ENCODE measurements at regions of chr19 and their contacts with region 1.

Region 1: DNA sequence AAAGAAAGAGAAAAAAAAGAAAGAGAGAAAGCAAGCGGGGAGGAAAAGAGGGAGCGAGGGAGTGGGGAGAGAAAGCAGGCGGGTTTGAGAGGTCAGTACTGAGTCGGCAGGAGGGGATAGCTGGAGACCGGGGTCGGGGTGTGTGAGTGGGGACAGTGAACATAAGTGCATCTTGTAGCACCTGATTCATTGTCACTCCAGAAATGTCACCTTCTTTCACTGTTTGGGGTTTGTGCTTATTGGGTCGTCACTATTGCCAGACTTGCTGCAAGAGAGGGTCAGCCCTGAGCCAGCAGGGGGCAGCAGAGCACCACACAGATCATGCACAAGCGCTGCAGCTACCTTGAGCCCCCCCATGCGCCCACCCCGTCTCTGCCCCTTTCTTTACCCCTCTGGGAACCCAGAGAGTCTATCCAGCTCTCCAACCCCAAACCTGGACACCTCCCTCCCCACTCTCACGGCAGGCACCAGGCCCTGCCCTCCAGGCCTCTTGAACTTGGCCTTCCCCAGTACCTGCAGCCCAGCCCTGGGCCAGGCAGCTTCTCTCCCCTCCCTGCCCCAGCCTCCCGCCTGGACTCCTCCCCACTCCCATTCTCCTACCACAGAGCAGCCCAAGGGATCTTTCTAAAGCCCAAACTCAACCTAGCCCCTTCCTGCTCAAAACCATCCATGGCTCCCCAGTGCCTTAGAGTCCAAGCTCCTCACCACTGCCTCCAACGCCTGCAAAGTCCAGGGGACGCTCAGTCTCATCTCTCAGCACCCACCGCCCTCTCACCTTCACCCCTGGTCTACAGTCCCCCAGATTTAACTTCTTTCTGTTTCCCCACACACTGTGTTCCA is 9.7 kb upstream of the CEACAM16 start:
- DNase-seq: peak; percentile 93
- H3K4me3 Mint-ChIP-seq: no peak overlapping the region
- H3K27ac Mint-ChIP-seq: peak overlapping the region; percentile 27
- H3K4me1 Mint-ChIP-seq: peaks cover 38% of the 10 kb centered on the region
- H3K27me3 Mint-ChIP-seq: peaks cover 12% of the 10 kb centered on the region

Region 2: GRCh38 chr19:44607049-44607448 is 82.2 kb before region 1 on chr19:
- intact Hi-C with region 1: no loop called
- DNase-seq: no peak
- H3K4me3 Mint-ChIP-seq: no peak overlapping the region
- H3K27ac Mint-ChIP-seq: no peak overlapping the region
- H3K4me1 Mint-ChIP-seq: peaks cover 2% of the 10 kb centered on the region
- H3K27me3 Mint-ChIP-seq: no peaks in the 10 kb centered on the region

Region 3: DNA sequence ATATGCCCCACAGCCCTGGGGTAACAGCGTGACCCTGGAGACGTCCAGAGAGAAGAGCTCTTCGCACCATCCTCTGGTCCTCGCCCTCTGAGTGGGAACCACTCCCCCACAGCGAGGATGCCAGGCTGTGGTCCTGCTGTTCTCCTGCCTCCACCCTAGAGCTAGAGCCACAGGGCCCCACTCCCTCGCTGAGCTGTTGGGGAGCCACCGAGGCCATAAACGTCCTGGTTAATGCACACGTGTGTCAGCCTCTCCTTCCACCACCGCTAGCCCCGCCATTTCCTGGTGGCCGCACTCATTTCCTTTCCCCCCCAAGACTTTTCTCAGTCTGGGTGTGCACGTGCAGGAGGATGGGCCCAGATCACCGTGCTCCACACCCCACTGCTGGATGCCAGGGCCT is 21.2 kb after region 1 on chr19:
- intact Hi-C with region 1: no loop called
- DNase-seq: no peak
- H3K4me3 Mint-ChIP-seq: no peak overlapping the region
- H3K27ac Mint-ChIP-seq: no peak overlapping the region
- H3K4me1 Mint-ChIP-seq: peaks cover 8% of the 10 kb centered on the region
- H3K27me3 Mint-ChIP-seq: peaks cover 8% of the 10 kb centered on the region

Region 4: DNA sequence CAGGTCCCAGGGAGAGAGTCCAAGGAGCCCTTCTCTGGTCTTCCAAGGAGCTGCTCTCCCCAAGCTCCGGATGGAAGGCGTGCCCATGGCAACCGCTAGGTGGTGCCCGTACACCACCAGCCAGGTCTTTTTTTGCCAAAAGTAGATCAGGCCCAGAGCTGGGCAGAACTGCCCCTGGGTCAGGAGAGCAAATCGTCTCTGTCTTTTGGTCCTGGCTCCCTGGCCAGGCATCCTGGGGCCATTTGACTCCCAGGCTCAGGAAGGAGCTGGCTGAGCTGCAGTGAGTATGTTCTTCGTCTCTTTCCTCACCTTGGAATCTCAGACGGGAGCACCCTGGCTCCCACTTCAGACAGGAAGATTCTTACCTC is 34.7 kb after region 1 on chr19:
- intact Hi-C with region 1: loop called (anchors 1 kb)
- DNase-seq: peak; percentile 95
- H3K4me3 Mint-ChIP-seq: peak overlapping the region; percentile 40
- H3K27ac Mint-ChIP-seq: peak overlapping the region; percentile 45
- H3K4me1 Mint-ChIP-seq: peaks cover 46% of the 10 kb centered on the region
- H3K27me3 Mint-ChIP-seq: no peaks in the 10 kb centered on the region

Region 5: GRCh38 chr19:44746946-44747738 is 57.9 kb after region 1 on chr19:
- intact Hi-C with region 1: loop called (anchors 1 kb)
- DNase-seq: peak; percentile 97
- H3K4me3 Mint-ChIP-seq: peak overlapping the region; percentile 93
- H3K27ac Mint-ChIP-seq: peak overlapping the region; percentile 94
- H3K4me1 Mint-ChIP-seq: peaks cover 52% of the 10 kb centered on the region
- H3K27me3 Mint-ChIP-seq: peaks cover 4% of the 10 kb centered on the region

Region 6: DNA sequence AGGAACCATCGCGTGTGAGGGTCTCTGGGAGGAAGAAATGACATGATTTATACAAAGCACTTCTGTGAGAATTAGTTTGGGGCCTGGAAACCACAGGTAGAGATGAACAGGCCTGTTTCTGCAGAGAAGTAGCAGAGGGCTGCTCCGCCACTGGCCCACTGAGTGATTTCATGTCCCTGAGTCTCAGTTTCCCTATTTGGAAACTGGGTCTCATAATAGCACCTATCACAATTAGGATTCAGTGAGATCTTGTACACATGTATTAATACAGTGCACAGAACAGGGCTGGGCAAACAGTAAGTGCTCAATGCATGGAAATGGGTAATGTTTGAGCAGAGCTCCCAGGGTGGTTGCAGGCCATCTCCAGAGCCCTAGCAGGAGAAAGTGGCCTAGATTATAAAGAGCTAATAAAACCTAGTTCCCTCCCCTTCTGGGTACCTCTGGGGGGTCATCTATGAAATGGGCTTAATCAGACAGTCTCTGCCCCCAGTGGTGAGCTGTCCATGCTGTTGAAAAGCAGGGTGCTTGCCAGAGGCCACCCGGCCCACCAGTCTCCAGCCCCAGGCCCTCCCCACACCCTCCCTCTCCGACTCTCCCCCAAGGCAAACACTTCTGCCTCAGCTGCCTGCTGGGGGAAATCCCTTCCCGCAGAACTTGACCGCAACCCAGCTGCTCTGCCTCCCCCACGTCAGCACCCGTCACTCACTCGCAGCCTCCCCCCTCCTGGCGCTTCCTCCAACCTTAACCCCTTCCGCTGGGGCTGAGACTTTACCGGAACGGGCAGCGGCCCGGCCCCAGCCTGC is 63.7 kb after region 1 on chr19:
- intact Hi-C with region 1: loop called (anchors 1 kb)
- DNase-seq: peak; percentile 99
- H3K4me3 Mint-ChIP-seq: peak overlapping the region; percentile 95
- H3K27ac Mint-ChIP-seq: peak overlapping the region; percentile 84
- H3K4me1 Mint-ChIP-seq: peaks cover 62% of the 10 kb centered on the region
- H3K27me3 Mint-ChIP-seq: peaks cover 2% of the 10 kb centered on the region